Right ventricle myocardium inferior (tissue), 1 donor: ENCODE measurements at regions of chr5 and their contacts with region 1.

Region 1: DNA sequence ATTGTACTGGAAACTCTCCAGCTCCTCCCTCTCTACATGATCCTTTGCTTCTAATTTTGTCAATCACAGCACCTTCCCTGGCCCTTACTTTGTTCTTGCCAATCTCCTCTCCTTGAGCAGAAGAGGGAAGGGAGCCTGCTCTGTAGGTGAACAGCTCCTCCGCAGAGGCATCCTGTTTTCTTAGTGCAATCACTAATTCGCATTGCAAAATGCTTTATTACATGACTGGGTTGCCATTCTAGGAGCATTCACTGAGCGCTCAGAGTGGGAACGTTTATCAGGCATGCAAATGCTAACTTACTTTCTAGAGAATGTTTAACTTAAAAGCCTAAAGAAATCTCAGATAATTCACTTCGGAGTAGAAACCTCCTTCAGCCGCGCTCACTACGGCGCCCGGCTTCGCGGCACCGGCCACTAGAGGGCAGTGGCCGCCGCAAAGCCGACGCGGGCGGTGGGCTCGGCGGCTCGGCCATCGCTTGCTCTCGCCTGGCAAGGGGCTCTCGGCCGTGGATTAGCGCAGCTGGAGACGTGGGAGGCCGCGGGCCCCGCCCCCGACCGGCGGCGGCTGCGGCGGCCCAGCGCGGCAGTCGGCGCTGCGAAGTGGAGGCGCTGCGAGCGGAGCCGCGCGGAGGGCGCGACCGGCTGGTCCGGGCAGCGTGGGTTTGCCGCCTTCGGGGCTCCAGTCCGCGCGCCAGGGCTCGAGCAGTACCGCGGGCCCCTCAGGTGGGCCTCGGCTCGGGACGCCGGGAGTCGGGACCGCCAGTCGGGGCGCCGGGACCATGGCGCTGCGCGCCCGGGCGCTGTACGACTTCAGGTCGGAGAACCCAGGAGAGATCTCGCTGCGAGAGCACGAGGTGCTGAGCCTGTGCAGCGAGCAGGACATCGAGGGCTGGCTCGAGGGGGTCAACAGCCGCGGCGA is at the start of gene SNX18:
- DNase-seq: peak; percentile 97
- ATAC-seq: peak; percentile 95
- total RNA-seq, gene SNX18: 25.2 TPM

Region 2: DNA sequence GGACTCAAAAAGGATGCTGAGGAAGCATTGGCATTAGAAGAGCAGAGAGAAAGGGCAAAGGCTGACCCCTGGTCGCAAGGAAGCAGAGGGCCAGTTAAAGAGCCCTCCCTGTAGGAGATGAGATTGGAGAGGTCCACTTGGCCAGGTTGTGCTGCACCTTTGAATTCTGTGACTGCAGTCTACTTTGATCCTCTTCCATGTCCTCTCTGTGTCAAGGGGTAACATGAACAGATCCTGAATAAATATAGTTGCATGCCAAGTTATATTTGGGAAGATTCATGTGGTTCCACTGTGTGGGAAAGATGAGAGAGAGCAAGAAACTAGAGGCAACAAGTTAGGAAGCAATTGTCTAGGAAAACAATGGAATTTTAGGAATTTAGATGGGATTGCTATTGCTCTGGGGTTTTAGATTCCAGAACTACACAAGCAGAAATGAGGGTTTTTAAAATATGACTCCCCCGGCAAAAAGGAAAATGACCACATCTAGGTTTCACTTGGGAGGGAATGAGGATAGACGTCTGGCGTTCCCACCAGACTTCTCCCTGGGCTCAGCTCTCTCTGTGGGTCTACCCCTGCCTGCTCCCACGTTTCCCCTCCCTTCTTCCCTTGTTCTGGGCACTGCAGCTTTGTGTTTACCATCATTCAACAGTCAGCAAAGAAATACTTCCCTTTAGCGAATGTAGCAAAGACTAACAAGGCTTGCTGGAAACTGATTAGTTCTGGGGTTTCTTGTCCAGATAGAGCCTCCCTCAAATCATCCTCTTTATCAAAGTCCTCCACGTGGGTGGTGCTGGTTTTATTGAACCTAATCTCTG is 63.8 kb after region 1 on chr5:
- intact Hi-C with region 1: loop called (anchors 5 kb)
- DNase-seq: no peak
- ATAC-seq: peak; percentile 51

Region 3: GRCh38 chr5:54703133-54703532 is 185.7 kb after region 1 on chr5:
- intact Hi-C with region 1: loop called (anchors 5 kb)
- DNase-seq: no peak
- ATAC-seq: peak; percentile 74

Region 4: DNA sequence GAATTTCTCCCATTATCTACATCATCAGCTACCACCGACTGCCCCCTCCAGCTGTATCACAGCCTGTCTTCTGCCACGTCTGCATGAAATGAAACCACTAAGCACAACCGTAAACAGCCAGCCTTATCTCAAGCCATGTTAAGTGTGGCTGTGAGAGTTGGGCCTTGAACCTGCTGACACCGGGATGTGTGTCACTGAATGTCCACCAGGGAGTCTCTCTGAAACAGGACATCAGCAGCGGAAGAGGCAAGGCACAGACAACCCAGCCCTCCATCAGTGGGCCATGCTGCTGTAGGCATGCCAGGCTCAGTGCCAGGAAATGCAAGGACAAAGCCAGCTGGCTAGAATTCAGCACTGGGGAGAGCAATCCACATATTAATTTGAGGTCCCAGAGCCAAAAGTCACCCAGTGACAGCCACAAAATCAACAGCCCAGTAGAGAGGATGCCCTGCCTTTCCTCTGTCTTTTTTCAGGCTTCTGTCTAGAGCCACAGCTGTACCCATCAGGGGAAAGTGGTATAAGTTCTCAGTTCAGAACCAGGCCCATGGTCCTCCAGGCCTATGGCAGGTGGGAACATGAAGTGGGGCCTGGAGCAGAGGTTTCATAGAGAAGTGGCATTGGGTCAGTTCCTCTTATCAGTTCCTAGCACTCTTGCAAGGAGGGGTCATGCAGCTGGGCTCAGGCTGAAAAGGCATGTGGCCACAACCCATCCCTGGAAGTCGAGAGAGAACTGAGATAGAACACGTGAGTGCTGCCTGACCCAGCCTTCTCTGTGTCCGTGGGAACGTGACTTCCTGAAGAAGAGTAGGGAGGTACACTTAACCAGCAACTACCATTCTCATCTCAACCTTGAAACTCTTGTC is 268.5 kb after region 1 on chr5:
- intact Hi-C with region 1: loop called (anchors 5 kb)
- DNase-seq: peak; percentile 65
- ATAC-seq: peak; percentile 96

Region 5: GRCh38 chr5:54867310-54867944 is 350.0 kb after region 1 on chr5:
- intact Hi-C with region 1: loop called (anchors 1 kb)
- DNase-seq: no peak
- ATAC-seq: no peak